MCF 10A (cell line): ENCODE measurements at regions of chr2 and their contacts with region 1.

Region 1: GRCh38 chr2:192194866-192195547 is at the start of gene TMEFF2:
- DNase-seq: peak; percentile 45
- H3K4me3 Mint-ChIP-seq: peak within 1 kb of the TSS; percentile 86
- H3K27ac Mint-ChIP-seq: no peak within 1 kb of the TSS
- H3K4me1 Mint-ChIP-seq: peaks cover 15% of the 10 kb centered on the region
- H3K27me3 Mint-ChIP-seq: peaks cover 41% of the 10 kb centered on the region
- CTCF ChIP-seq: peak; percentile 26
- total RNA-seq, gene TMEFF2: not detected in 2 replicates

Region 2: GRCh38 chr2:192286093-192286701 is 91.2 kb after region 1 on chr2:
- CTCF ChIA-PET with region 1: interaction called, 11 read pairs
- POLR2A ChIA-PET with region 1: interaction called, 3 read pairs
- intact Hi-C with region 1: loop called (anchors 1 kb)
- DNase-seq: peak; percentile 68
- H3K4me3 Mint-ChIP-seq: no peak overlapping the region
- H3K27ac Mint-ChIP-seq: no peak overlapping the region
- H3K4me1 Mint-ChIP-seq: no peaks in the 10 kb centered on the region
- H3K27me3 Mint-ChIP-seq: no peaks in the 10 kb centered on the region
- CTCF ChIP-seq: peak; percentile 43

Region 3: GRCh38 chr2:192559541-192560120 is 364.6 kb after region 1 on chr2:
- CTCF ChIA-PET with region 1: no interaction called
- POLR2A ChIA-PET with region 1: no interaction called
- intact Hi-C with region 1: loop called (anchors 5 kb)
- DNase-seq: no peak
- H3K4me3 Mint-ChIP-seq: no peak overlapping the region
- H3K27ac Mint-ChIP-seq: no peak overlapping the region
- H3K4me1 Mint-ChIP-seq: no peaks in the 10 kb centered on the region
- H3K27me3 Mint-ChIP-seq: no peaks in the 10 kb centered on the region
- CTCF ChIP-seq: no peak

Region 4: DNA sequence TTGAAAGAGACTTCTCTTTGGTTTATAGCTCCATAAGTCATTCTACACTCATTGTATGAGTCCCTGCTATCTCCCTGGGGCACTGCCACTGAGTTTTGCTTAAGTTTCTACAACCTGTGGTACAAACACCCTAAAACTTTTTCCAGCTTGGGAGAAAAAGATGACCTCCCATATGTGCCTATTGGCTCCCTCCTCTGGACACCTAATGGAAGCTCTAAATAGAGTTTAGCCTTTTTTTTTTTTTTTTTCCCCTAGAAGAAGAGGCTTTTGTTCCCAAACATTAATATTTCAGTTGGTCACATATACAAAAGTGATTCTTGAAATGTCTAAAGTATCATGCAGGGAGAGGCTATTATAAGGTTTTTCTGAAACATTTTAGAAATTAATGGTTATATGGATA is 546.9 kb after region 1 on chr2:
- CTCF ChIA-PET with region 1: interaction called, 4 read pairs
- POLR2A ChIA-PET with region 1: no interaction called
- intact Hi-C with region 1: loop called (anchors 1 kb)
- DNase-seq: peak; percentile 39
- H3K4me3 Mint-ChIP-seq: no peak overlapping the region
- H3K27ac Mint-ChIP-seq: no peak overlapping the region
- H3K4me1 Mint-ChIP-seq: no peaks in the 10 kb centered on the region
- H3K27me3 Mint-ChIP-seq: no peaks in the 10 kb centered on the region
- CTCF ChIP-seq: peak; percentile 31

Region 5: GRCh38 chr2:193584522-193584938 is 1389.5 kb after region 1 on chr2:
- CTCF ChIA-PET with region 1: interaction called, 8 read pairs
- POLR2A ChIA-PET with region 1: interaction called, 3 read pairs
- intact Hi-C with region 1: loop called (anchors 5 kb)
- DNase-seq: peak; percentile 40
- H3K4me3 Mint-ChIP-seq: no peak overlapping the region
- H3K27ac Mint-ChIP-seq: peak overlapping the region; percentile 2
- H3K4me1 Mint-ChIP-seq: no peaks in the 10 kb centered on the region
- H3K27me3 Mint-ChIP-seq: no peaks in the 10 kb centered on the region
- CTCF ChIP-seq: peak; percentile 53